ENCODE measurements at regions of chr6 and their contacts with region 1.

Region 1: DNA sequence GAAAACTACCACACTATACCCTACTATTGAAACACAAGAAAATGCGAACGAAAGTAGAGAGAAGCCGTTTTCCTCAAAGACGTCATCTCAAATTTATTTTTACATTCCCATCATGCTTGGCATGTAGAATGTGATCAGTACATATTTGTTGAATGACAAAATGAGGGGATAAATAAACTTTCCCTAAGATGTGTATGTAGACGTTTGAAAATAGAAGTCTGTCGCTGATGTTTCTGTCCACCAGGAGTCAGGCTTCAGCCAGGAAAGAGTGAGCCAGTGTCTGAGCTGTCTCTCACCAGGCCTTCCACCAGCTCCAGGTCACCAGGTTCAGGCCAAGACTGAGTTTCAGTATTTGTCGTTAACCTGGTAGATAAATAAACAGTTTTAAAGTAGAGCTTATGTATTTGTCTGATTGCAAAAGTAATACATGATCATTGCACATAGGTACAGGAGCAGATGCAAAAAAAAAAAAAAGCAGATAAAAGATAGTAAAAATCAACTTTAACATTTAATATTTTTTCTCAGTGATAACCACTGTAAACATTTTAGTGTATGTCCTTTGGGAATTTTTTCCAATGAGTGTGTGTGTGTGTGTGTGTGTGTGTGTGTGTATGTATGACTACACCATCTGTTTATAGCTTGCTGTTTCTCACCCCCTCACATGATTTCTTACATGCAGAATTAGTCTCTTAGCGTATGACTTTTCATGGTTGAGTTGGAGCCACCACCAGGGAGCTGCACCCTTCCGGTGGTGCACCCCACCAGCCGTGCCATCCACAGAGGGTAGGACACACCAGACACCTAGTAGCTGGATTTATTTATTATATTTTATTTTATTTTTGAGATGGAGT is 26.2 kb downstream of the WRNIP1 start:
- DNase-seq: peak; percentile 41 to 57 (median 53)
- H3K4me3 ChIP-seq: no peak overlapping the region
- H3K4me3 Mint-ChIP-seq: peak overlapping the region in 6 of 8 donors; percentile 17 to 61 (median 40)
- H3K27ac ChIP-seq: no peak overlapping the region
- H3K27ac Mint-ChIP-seq: peak overlapping the region; percentile 36 to 83 (median 68)
- H3K4me1 ChIP-seq: peaks cover 26% of the 10 kb centered on the region
- H3K4me1 Mint-ChIP-seq: peaks cover 22 to 35% (median 26%) of the 10 kb centered on the region in 4 donors
- H3K27me3 ChIP-seq: no peaks in the 10 kb centered on the region
- H3K27me3 Mint-ChIP-seq: no peaks in the 10 kb centered on the region

Region 2: DNA sequence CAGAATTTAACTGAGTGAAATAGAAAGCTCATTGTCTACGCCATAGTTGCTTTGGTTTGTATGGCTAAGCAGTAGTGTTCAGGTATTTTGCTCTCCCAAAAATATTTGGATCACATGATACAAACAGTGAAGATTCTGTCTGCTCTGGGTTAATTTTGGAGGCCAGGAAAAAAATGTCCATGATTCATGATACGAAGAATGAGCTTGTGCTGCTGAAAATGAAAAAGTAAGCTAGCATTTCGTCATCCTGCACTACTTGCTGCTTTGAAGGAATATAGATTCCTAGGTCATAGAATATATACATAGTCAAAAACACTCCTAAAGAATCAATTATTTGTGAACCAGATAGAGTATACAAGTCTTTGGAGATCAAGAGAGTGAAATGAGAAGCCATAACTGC is 17.9 kb before region 1 on chr6:
- CTCF ChIA-PET with region 1: interaction called, 11 read pairs
- POLR2A ChIA-PET with region 1: no interaction called
- intact Hi-C with region 1: no loop called
- DNase-seq: no peak
- H3K4me3 ChIP-seq: no peak overlapping the region
- H3K4me3 Mint-ChIP-seq: no peak overlapping the region
- H3K27ac ChIP-seq: no peak overlapping the region
- H3K27ac Mint-ChIP-seq: peak overlapping the region in 1 of 7 donors; percentile 16
- H3K4me1 ChIP-seq: peaks cover 20% of the 10 kb centered on the region
- H3K4me1 Mint-ChIP-seq: peaks cover 41 to 73% (median 55%) of the 10 kb centered on the region in 4 donors
- H3K27me3 ChIP-seq: no peaks in the 10 kb centered on the region
- H3K27me3 Mint-ChIP-seq: no peaks in the 10 kb centered on the region

Region 3: DNA sequence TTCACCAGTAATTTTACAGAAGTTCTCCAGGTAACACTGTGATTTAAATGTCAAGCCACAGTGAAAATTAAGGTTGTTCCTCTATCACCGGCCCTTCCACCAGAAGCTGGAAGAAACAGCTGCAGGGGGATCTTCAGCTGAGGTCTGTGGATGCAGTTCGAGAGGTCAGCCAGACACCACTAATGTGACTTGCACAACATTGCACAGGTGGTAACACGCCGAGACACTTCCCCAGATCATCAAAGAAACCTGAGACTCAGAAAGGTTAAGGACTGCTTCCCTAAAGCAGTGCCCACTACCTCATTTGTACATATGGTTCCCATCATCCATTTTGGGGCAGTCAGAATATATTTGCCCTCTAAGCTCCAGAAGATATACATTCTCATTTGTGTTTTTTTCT is 119.8 kb after region 1 on chr6:
- CTCF ChIA-PET with region 1: interaction called, 13 read pairs
- POLR2A ChIA-PET with region 1: interaction called, 4 read pairs
- intact Hi-C with region 1: loop called (anchors 1 kb)
- DNase-seq: no peak
- H3K4me3 ChIP-seq: no peak overlapping the region
- H3K4me3 Mint-ChIP-seq: no peak overlapping the region
- H3K27ac ChIP-seq: no peak overlapping the region
- H3K27ac Mint-ChIP-seq: no peak overlapping the region
- H3K4me1 ChIP-seq: peaks cover 6% of the 10 kb centered on the region
- H3K4me1 Mint-ChIP-seq: peaks cover 15 to 31% (median 22%) of the 10 kb centered on the region in 4 donors
- H3K27me3 ChIP-seq: no peaks in the 10 kb centered on the region
- H3K27me3 Mint-ChIP-seq: no peaks in the 10 kb centered on the region

Region 4: DNA sequence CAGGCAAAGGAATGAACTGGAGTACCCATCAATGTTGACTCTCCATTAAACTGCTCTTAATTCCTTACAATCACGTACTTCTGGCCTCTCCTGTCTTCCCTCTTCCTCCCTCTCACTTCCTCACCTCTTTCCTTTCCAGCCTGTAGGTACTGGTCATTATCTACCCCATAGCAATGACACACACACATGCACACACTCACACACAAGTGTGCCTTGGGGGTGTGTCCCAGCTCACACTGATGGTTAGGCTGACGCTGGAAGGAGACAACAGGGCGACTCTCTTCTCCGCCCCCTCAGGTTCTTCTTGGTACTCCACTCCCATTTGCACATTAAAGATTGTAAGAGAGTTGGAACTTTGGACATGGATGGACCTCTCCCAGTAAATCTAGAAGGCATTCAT is 125.7 kb after region 1 on chr6:
- CTCF ChIA-PET with region 1: interaction called, 13 read pairs
- POLR2A ChIA-PET with region 1: interaction called, 4 read pairs
- intact Hi-C with region 1: no loop called
- DNase-seq: no peak
- H3K4me3 ChIP-seq: no peak overlapping the region
- H3K4me3 Mint-ChIP-seq: no peak overlapping the region
- H3K27ac ChIP-seq: no peak overlapping the region
- H3K27ac Mint-ChIP-seq: no peak overlapping the region
- H3K4me1 ChIP-seq: peaks cover 11% of the 10 kb centered on the region
- H3K4me1 Mint-ChIP-seq: peaks cover 7 to 12% (median 8%) of the 10 kb centered on the region in 4 donors
- H3K27me3 ChIP-seq: no peaks in the 10 kb centered on the region
- H3K27me3 Mint-ChIP-seq: peaks cover 0 to 2% of the 10 kb centered on the region in 2 donors

Region 5: DNA sequence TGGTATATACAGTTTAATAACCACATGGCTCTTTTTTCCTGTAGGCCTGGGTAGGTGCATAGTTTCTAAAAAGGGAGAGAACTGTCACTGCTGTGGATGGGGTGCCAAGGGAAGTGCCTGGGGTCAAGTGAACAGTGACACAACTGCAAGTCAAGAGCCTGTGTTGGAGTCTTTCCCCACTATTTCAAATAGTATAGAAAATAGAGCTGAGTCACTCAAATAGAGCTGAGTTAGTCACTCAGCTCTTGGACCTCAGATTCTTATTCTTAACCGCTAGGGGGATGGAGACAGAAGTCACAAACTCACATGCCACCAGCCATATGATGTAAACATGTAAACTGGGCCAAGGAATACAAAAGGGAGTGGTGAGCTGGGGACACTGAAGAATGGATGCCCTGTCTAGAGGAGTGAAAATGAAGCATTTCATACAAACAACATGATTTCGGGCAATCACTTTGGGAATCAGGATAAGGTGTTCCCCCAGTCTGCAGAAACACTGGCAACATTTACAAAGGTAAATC is 210.5 kb after region 1 on chr6:
- CTCF ChIA-PET with region 1: no interaction called
- POLR2A ChIA-PET with region 1: no interaction called
- intact Hi-C with region 1: no loop called
- DNase-seq: peak; percentile 49 to 60 (median 50)
- H3K4me3 ChIP-seq: no peak overlapping the region
- H3K4me3 Mint-ChIP-seq: peak overlapping the region; percentile 15 to 80 (median 58)
- H3K27ac ChIP-seq: no peak overlapping the region
- H3K27ac Mint-ChIP-seq: peak overlapping the region in 6 of 7 donors; percentile 5 to 90 (median 42)
- H3K4me1 ChIP-seq: peaks cover 23% of the 10 kb centered on the region
- H3K4me1 Mint-ChIP-seq: peaks cover 20 to 40% (median 30%) of the 10 kb centered on the region in 4 donors
- H3K27me3 ChIP-seq: no peaks in the 10 kb centered on the region
- H3K27me3 Mint-ChIP-seq: no peaks in the 10 kb centered on the region